Activated CD4-positive, alpha-beta memory T cell treated with anti-CD3 and anti-CD28 coated beads for 36 hours (primary cell): ENCODE measurements at regions of chr12 and their contacts with region 1.

Region 1: GRCh38 chr12:122197612-122197966 is 5.9 kb upstream of the B3GNT4 start:
- DNase-seq: no peak
- H3K4me3 Mint-ChIP-seq: peak overlapping the region; percentile 57
- H3K27ac Mint-ChIP-seq: peak overlapping the region; percentile 93
- H3K4me1 Mint-ChIP-seq: peaks cover 19% of the 10 kb centered on the region
- H3K27me3 Mint-ChIP-seq: peaks cover 16% of the 10 kb centered on the region

Region 2: DNA sequence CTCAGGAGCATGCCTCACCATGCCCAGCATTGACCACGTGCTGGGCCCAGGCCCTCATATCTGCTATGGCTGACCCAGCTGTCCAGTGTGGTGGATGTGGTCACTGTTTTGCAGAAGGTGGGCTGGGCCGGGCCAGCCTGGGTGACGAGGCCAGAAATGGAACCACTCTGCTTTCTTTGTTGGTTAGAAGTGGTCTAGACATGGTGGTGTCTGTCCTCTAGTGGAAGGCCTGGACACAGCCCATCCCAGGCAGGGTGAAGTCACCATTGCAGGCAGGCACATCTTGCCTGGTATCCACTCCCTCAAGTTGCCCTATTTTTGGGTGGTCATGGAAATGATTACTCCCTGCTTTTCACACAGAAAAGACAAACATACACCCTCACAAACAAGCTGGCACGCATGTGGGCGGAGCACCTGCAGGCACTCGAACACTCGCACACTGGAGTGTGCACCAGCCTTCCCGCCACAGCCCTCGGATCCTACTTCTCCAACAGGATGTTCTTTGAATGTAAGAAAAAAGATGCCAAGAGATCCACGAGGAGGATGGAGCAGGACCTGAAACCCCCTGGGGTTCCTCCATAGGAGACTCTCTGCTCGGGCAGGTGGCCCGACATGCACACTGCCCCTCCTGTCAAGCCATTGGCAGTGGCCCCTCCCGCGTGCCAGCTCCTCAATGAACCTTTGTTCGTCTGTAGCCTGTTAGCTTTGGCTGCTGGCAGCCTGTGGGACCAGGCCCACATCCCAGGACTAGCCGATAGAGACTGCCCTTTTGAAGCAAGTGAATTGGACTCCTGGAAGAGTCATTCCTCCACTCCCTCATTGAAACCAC is 80.7 kb before region 1 on chr12:
- CTCF ChIA-PET with region 1: no interaction called
- POLR2A ChIA-PET with region 1: no interaction called
- intact Hi-C with region 1: no loop called
- DNase-seq: no peak
- H3K4me3 Mint-ChIP-seq: no peak overlapping the region
- H3K27ac Mint-ChIP-seq: no peak overlapping the region
- H3K4me1 Mint-ChIP-seq: peaks cover 15% of the 10 kb centered on the region
- H3K27me3 Mint-ChIP-seq: no peaks in the 10 kb centered on the region

Region 3: DNA sequence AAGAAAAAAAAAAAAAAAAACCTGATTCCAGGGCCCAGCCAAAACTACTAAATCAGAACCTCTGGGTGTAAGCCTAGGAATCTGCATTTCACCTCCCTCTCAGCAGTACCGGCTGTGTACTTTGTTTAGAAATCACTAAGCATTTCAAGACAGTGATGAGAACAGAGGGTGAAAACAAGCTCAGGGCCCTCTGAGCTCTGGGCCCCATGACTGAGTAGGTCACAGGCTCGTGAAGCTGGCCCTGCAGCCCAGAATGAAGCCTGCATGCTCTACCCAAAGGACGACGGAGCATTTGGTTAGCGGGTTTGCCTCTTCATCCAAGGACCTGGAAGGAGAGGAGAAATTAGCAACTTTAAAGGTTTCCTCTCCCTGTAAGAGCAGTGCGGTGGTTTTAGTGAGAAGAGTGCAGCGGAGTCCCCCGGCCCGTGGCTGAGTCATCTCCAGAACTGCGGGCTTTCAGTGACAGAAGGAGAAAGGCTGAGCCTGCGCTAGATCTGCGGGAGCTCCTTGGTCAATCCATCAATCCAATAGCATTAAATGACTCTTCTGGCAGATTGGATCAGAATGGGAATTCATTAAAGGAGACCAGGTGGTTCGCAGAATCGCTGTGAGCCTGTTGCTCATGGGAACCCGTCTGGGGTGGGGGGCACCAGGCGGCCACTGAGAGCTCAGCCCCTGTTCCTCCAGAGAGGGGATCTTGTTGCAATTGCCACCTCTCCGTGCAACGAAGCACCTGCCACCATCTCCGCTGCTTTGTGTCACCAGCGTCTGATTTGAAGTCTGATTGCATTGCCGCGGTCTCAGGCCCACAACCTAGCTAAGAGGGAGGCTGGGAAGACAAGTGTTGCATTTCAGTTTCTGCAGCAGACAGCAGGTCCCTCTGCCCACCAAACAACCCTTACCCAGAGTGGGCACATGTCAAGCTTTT is 30.9 kb before region 1 on chr12:
- CTCF ChIA-PET with region 1: no interaction called
- POLR2A ChIA-PET with region 1: no interaction called
- intact Hi-C with region 1: loop called (anchors 2 kb)
- DNase-seq: peak; percentile 91
- H3K4me3 Mint-ChIP-seq: no peak overlapping the region
- H3K27ac Mint-ChIP-seq: peak overlapping the region; percentile 76
- H3K4me1 Mint-ChIP-seq: peaks cover 20% of the 10 kb centered on the region
- H3K27me3 Mint-ChIP-seq: peaks cover 19% of the 10 kb centered on the region

Region 4: GRCh38 chr12:122306407-122306806 is 108.8 kb after region 1 on chr12:
- CTCF ChIA-PET with region 1: no interaction called
- POLR2A ChIA-PET with region 1: no interaction called
- intact Hi-C with region 1: no loop called
- DNase-seq: no peak
- H3K4me3 Mint-ChIP-seq: no peak overlapping the region
- H3K27ac Mint-ChIP-seq: no peak overlapping the region
- H3K4me1 Mint-ChIP-seq: no peaks in the 10 kb centered on the region
- H3K27me3 Mint-ChIP-seq: no peaks in the 10 kb centered on the region